Endothelial cell of umbilical vein (primary cell): ENCODE measurements at regions of chr12 and their contacts with region 1.

Region 1: GRCh38 chr12:59041241-59042121 is 121.2 kb upstream of the LRIG3 start:
- DNase-seq: peak; percentile 89
- H3K4me3 ChIP-seq: no peak overlapping the region
- H3K27ac ChIP-seq: peak overlapping the region; percentile 81
- H3K4me1 ChIP-seq: peaks cover 32% of the 10 kb centered on the region
- H3K27me3 ChIP-seq: no peaks in the 10 kb centered on the region
- CTCF ChIP-seq: no peak
- POLR2A ChIP-seq: peak; percentile 27

Region 2: GRCh38 chr12:58961906-58962305 is 79.6 kb before region 1 on chr12:
- CTCF ChIA-PET with region 1: no interaction called
- POLR2A ChIA-PET with region 1: no interaction called
- dilution Hi-C with region 1: no loop called
- intact Hi-C with region 1: loop called (anchors 2 kb)
- DNase-seq: peak; percentile 72
- H3K4me3 ChIP-seq: peak overlapping the region in 1 of 3 experiments; percentile 15
- H3K27ac ChIP-seq: peak overlapping the region; percentile 97
- H3K4me1 ChIP-seq: peaks cover 18% of the 10 kb centered on the region
- H3K27me3 ChIP-seq: no peaks in the 10 kb centered on the region
- CTCF ChIP-seq: no peak
- POLR2A ChIP-seq: no peak

Region 3: GRCh38 chr12:59055204-59055839 is 13.8 kb after region 1 on chr12:
- CTCF ChIA-PET with region 1: interaction called, 4 read pairs
- POLR2A ChIA-PET with region 1: no interaction called
- dilution Hi-C with region 1: no loop called
- intact Hi-C with region 1: loop called (anchors 1 kb)
- DNase-seq: peak; percentile 90
- H3K4me3 ChIP-seq: peak overlapping the region in 1 of 3 experiments; percentile 27
- H3K27ac ChIP-seq: peak overlapping the region; percentile 76
- H3K4me1 ChIP-seq: peaks cover 26% of the 10 kb centered on the region
- H3K27me3 ChIP-seq: no peaks in the 10 kb centered on the region
- CTCF ChIP-seq: no peak
- POLR2A ChIP-seq: no peak

Region 4: DNA sequence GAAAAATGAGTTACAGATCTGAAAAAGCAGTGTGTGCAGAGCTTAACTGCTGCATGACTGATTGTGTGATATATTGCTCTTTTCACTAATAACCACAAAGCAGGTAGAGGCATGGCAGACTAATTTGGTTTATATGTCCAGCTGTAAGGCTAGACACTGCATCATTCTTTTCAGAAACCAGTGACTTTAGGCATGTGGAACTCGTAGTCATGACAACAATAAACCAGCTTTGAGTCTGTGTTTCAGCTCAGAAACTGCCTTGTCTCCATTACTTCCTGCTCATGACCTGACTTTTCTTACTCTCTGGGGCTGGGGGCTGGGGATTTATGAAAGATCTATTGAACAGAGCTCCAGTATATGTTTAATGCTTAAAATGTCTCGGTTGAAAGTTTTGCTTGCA is 25.6 kb after region 1 on chr12:
- CTCF ChIA-PET with region 1: interaction called, 8 read pairs
- POLR2A ChIA-PET with region 1: no interaction called
- dilution Hi-C with region 1: no loop called
- intact Hi-C with region 1: loop called (anchors 1 kb)
- DNase-seq: peak; percentile 76
- H3K4me3 ChIP-seq: no peak overlapping the region
- H3K27ac ChIP-seq: no peak overlapping the region
- H3K4me1 ChIP-seq: peaks cover 32% of the 10 kb centered on the region
- H3K27me3 ChIP-seq: no peaks in the 10 kb centered on the region
- CTCF ChIP-seq: no peak
- POLR2A ChIP-seq: no peak

Region 5: DNA sequence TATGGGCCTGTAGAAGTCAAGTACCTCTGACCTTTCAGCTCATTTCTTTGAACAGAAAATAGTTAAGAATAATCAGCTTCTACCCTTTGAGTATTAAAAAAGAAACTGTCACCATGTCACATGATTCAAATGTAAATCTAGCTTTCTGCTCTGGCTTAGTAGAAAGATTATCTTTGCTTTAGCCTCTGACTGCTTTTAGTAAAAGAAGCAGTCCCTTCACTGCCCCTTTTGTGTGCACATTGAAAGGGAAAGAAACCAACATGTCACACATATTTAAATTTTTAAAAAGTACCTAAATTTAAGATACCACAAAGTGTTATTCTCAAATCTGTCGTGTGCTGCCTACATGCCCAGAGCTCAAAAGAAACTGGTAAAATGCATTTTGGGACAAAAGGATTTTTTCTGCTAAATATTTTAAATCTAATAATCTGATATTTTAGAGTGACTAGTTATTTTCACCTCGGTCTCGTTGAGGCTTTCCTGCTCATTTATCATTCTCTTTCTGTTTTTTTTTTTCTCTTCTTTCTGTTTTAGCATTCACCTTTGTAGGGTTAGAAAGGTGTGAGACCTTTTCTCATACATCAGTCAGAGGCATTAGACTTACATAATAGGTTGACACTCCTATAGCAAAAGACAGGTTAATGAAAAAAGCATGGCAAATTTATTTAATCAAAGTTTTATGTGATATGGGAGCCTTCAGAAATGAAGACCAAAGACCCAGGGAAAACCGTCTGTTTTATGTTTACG is 595.6 kb after region 1 on chr12:
- CTCF ChIA-PET with region 1: no interaction called
- POLR2A ChIA-PET with region 1: no interaction called
- dilution Hi-C with region 1: no loop called
- intact Hi-C with region 1: no loop called
- DNase-seq: no peak
- H3K4me3 ChIP-seq: no peak overlapping the region
- H3K27ac ChIP-seq: no peak overlapping the region
- H3K4me1 ChIP-seq: no peaks in the 10 kb centered on the region
- H3K27me3 ChIP-seq: no peaks in the 10 kb centered on the region
- CTCF ChIP-seq: no peak
- POLR2A ChIP-seq: no peak